Heart left ventricle (tissue), 16 donors: ENCODE measurements at regions of chr4 and their contacts with region 1.

Region 1: DNA sequence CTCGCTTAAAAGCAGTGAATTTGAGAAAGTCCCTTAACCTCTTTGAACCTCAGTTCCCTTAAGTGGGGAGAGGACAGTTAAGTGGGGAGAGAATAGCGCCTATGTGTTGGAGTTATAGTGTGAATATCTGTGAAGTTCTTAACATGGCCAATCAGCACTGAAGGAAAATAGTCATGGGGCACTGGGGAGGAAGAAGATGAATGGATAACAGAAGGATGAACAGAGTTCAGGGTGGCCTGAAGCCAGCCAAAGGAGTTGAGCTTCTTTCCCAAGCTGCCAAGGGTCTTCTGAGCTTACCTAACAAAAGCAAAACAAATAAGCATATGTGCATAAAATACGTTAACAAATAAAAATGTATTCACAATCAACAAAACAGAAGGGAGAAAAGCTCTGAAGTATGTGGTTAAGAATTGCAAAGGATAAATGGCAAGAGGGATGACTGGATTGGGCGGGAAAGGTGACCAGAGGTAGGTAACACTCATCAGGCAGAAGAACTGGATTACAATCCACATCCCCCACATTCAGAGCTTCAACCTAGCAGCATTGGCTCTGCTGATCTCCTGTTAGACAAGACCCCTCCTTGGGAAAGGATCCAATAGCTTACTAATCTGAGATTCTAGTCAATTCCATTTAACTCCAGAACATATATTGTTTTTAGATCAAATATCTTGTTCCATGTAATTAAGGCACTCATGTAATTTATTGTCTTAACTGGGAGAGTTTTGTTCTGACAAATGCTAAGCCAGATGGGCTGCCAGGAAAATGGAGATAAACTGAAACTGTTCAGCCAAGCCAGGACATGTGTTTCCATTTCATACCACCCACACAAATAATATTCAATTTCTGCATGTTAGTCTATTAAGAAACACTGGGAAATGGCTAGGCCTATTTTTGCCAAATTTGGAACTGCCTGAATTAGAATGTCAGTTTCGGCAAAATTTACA is 221.2 kb downstream of the LDB2 start:
- DNase-seq: no peak
- ATAC-seq: peak in 3 of 4 donors; percentile 38 to 68 (median 58)
- H3K4me3 ChIP-seq: no peak overlapping the region
- H3K27ac ChIP-seq: peak overlapping the region in 3 of 12 donors; percentile 2 to 55 (median 51)
- H3K4me1 ChIP-seq: peaks cover 0 to 39% (median 5%) of the 10 kb centered on the region in 12 donors
- H3K27me3 ChIP-seq: no peaks in the 10 kb centered on the region
- CTCF ChIP-seq: no peak
- POLR2A ChIP-seq: no peak

Region 2: GRCh38 chr4:16591272-16591826 is 85.9 kb before region 1 on chr4:
- intact Hi-C with region 1: loop called in 1 of 10 experiments (anchors 5 kb)
- DNase-seq: no peak
- ATAC-seq: no peak
- H3K4me3 ChIP-seq: no peak overlapping the region
- H3K27ac ChIP-seq: no peak overlapping the region
- H3K4me1 ChIP-seq: peaks cover 0 to 17% (median 2%) of the 10 kb centered on the region in 12 donors
- H3K27me3 ChIP-seq: no peaks in the 10 kb centered on the region
- CTCF ChIP-seq: no peak
- POLR2A ChIP-seq: no peak

Region 3: GRCh38 chr4:16875487-16875886 is 198.2 kb after region 1 on chr4:
- intact Hi-C with region 1: no loop called
- DNase-seq: peak in 1 of 5 donors; percentile 38
- ATAC-seq: peak in 3 of 4 donors; percentile 46 to 93 (median 67)
- H3K4me3 ChIP-seq: no peak overlapping the region
- H3K27ac ChIP-seq: peak overlapping the region in 2 of 12 donors; percentile 34 to 37
- H3K4me1 ChIP-seq: peaks cover 0 to 8% (median 0%) of the 10 kb centered on the region in 12 donors
- H3K27me3 ChIP-seq: no peaks in the 10 kb centered on the region
- CTCF ChIP-seq: no peak
- POLR2A ChIP-seq: no peak

Region 4: GRCh38 chr4:17296921-17297890 is 619.9 kb after region 1 on chr4:
- intact Hi-C with region 1: no loop called
- DNase-seq: no peak
- ATAC-seq: no peak
- H3K4me3 ChIP-seq: no peak overlapping the region
- H3K27ac ChIP-seq: no peak overlapping the region
- H3K4me1 ChIP-seq: no peaks in the 10 kb centered on the region
- H3K27me3 ChIP-seq: no peaks in the 10 kb centered on the region
- CTCF ChIP-seq: no peak
- POLR2A ChIP-seq: no peak